ENCODE measurements at regions of chr12 and their contacts with region 1.

Region 1: DNA sequence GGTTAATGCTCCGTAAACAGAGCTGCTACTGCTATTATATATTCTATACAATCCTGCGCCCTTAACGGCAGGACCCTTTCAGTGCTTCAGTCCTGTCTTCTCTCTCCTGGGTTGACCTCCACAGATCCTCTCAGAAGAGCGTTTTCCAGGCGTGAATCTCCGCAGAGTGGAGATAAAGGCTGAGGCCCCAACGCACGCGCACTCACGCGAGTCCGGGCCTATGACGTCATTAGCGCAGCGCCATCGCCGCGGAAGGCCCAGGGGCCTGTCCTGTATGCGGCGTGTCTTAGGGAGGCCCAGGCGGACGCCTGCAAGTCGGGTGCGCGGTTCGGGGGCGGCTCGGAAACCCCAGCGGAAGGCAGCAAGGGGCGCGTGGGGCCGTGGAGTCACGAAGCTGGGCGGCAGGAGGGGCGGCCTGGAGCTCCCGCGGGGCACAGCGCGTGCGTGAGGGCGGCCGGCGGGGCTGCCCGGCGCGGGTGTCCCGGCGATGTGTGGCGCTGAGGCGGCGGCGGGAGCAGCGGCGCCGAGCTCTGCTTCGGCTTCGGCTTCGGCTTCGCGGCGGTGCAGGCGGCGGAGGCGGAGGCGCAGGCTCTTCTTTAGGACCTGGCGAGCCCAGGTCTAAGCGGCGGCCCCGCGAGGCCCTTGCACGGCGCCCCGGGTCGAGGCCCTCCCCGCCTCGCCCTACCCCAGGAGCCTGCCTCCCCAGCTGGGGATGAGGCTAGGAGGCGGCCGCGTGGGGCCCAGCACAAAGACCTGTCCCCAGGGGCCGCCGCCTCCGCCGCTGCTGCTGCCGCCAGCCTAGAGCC is at the start of gene MAPKAPK5:
- DNase-seq: peak; percentile 96 to 99 (median 97)
- H3K4me3 ChIP-seq: peak within 1 kb of the TSS; percentile 95 to 97
- H3K4me3 Mint-ChIP-seq: peak within 1 kb of the TSS; percentile 96 to 99 (median 99)
- H3K27ac ChIP-seq: peak within 1 kb of the TSS; percentile 84
- H3K27ac Mint-ChIP-seq: peak within 1 kb of the TSS; percentile 98 to 100 (median 100)
- H3K4me1 ChIP-seq: peaks cover 46% of the 10 kb centered on the region
- H3K4me1 Mint-ChIP-seq: peaks cover 42 to 80% (median 58%) of the 10 kb centered on the region in 4 donors
- H3K27me3 ChIP-seq: no peaks in the 10 kb centered on the region
- H3K27me3 Mint-ChIP-seq: peaks cover 0 to 1% of the 10 kb centered on the region in 2 donors
- total RNA-seq, gene MAPKAPK5: 59.6 to 68.1 TPM

Region 2: DNA sequence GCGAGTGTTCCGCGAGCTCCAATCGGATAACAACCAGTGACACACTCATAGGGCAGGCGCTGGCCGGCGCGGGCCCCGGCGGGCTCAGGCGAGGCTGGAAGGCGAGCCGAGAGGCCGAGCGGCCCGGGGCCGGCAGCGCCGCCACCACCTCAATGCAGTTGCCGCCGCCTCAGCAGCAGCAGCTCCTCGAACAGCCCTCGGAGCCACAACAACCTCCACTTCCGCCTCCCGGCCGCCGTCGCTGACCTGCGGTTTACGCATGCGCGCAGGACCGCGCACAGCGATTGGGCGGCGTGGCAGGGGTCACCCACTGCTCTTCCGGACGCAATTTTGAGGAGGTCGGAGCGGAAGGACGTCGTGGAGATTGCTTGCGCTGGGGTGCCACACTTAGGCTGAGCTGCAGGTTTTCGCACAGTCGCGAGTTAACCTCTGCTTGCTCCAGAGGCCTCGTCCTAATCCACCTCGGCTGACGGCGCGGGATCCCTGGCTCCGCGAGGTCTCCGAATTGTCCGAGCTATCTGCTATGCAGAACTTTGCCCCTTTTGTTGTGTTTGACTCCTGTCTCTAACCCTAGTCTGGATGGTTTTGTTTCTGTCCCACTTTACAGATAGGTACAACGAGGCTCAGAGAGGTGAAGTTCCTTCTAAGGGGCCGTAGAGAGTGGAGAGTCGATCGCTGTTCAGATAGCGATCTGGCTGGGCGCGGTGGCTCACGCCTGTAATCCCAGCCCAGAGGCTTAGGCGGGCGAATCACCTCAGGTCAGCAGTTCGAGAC is 156.0 kb before region 1 on chr12 and contains the starts of genes ACAD10 and BRAP:
- CTCF ChIA-PET with region 1: no interaction called
- POLR2A ChIA-PET with region 1: interaction called, 19 read pairs
- intact Hi-C with region 1: no loop called
- DNase-seq: peak; percentile 89 to 98 (median 94)
- H3K4me3 ChIP-seq: peak within 1 kb of the TSS; percentile 68 to 91
- H3K4me3 Mint-ChIP-seq: peak within 1 kb of the TSS; percentile 90 to 99 (median 96)
- H3K27ac ChIP-seq: peak within 1 kb of the TSS; percentile 83
- H3K27ac Mint-ChIP-seq: peak within 1 kb of the TSS; percentile 81 to 98 (median 97)
- H3K4me1 ChIP-seq: peaks cover 28% of the 10 kb centered on the region
- H3K4me1 Mint-ChIP-seq: peaks cover 17 to 64% (median 41%) of the 10 kb centered on the region in 4 donors
- H3K27me3 ChIP-seq: no peaks in the 10 kb centered on the region
- H3K27me3 Mint-ChIP-seq: no peaks in the 10 kb centered on the region
- total RNA-seq, gene ACAD10: 52.2 to 58.3 TPM
- total RNA-seq, gene BRAP: 25.9 to 27.5 TPM

Region 3: GRCh38 chr12:111803851-111804250 is 38.1 kb before region 1 on chr12:
- CTCF ChIA-PET with region 1: no interaction called
- POLR2A ChIA-PET with region 1: no interaction called
- intact Hi-C with region 1: no loop called
- DNase-seq: no peak
- H3K4me3 ChIP-seq: no peak overlapping the region
- H3K4me3 Mint-ChIP-seq: no peak overlapping the region
- H3K27ac ChIP-seq: no peak overlapping the region
- H3K27ac Mint-ChIP-seq: no peak overlapping the region
- H3K4me1 ChIP-seq: no peaks in the 10 kb centered on the region
- H3K4me1 Mint-ChIP-seq: no peaks in the 10 kb centered on the region
- H3K27me3 ChIP-seq: no peaks in the 10 kb centered on the region
- H3K27me3 Mint-ChIP-seq: no peaks in the 10 kb centered on the region

Region 4: GRCh38 chr12:111826316-111826715 is 15.6 kb before region 1 on chr12:
- CTCF ChIA-PET with region 1: interaction called, 6 read pairs
- POLR2A ChIA-PET with region 1: interaction called, 18 read pairs
- intact Hi-C with region 1: no loop called
- DNase-seq: no peak
- H3K4me3 ChIP-seq: no peak overlapping the region
- H3K4me3 Mint-ChIP-seq: no peak overlapping the region
- H3K27ac ChIP-seq: no peak overlapping the region
- H3K27ac Mint-ChIP-seq: no peak overlapping the region
- H3K4me1 ChIP-seq: no peaks in the 10 kb centered on the region
- H3K4me1 Mint-ChIP-seq: peaks cover 0 to 4% (median 0%) of the 10 kb centered on the region in 4 donors
- H3K27me3 ChIP-seq: no peaks in the 10 kb centered on the region
- H3K27me3 Mint-ChIP-seq: peaks cover 3 to 23% of the 10 kb centered on the region in 2 donors

Region 5: GRCh38 chr12:111868676-111869588 is 27.0 kb after region 1 on chr12:
- CTCF ChIA-PET with region 1: no interaction called
- POLR2A ChIA-PET with region 1: interaction called, 10 read pairs
- intact Hi-C with region 1: no loop called
- DNase-seq: no peak
- H3K4me3 ChIP-seq: no peak overlapping the region
- H3K4me3 Mint-ChIP-seq: no peak overlapping the region
- H3K27ac ChIP-seq: no peak overlapping the region
- H3K27ac Mint-ChIP-seq: peak overlapping the region in 3 of 7 donors; percentile 16 to 65 (median 63)
- H3K4me1 ChIP-seq: no peaks in the 10 kb centered on the region
- H3K4me1 Mint-ChIP-seq: peaks cover 0 to 5% (median 0%) of the 10 kb centered on the region in 4 donors
- H3K27me3 ChIP-seq: no peaks in the 10 kb centered on the region
- H3K27me3 Mint-ChIP-seq: no peaks in the 10 kb centered on the region

Region 6: GRCh38 chr12:112418608-112419298 is 576.8 kb after region 1 on chr12 and contains the start of gene PTPN11:
- CTCF ChIA-PET with region 1: no interaction called
- POLR2A ChIA-PET with region 1: interaction called, 3 read pairs
- intact Hi-C with region 1: loop called (anchors 2 kb)
- DNase-seq: peak; percentile 88 to 94 (median 90)
- H3K4me3 ChIP-seq: peak within 1 kb of the TSS; percentile 93 to 98
- H3K4me3 Mint-ChIP-seq: peak within 1 kb of the TSS; percentile 94 to 99 (median 96)
- H3K27ac ChIP-seq: peak within 1 kb of the TSS; percentile 89
- H3K27ac Mint-ChIP-seq: peak within 1 kb of the TSS; percentile 96 to 100 (median 98)
- H3K4me1 ChIP-seq: peaks cover 52% of the 10 kb centered on the region
- H3K4me1 Mint-ChIP-seq: peaks cover 30 to 52% (median 37%) of the 10 kb centered on the region in 4 donors
- H3K27me3 ChIP-seq: no peaks in the 10 kb centered on the region
- H3K27me3 Mint-ChIP-seq: peaks cover 0 to 3% of the 10 kb centered on the region in 2 donors
- total RNA-seq, gene PTPN11: 45.3 to 47.7 TPM

Measured in CD4-positive, alpha-beta memory T cell (primary cell).